Transverse colon (tissue), 4 donors: ENCODE measurements at regions of chr2 and their contacts with region 1.

Region 1: GRCh38 chr2:25362049-25362433 is 20.3 kb upstream of the DNMT3A start:
- DNase-seq: peak; percentile 94
- H3K4me3 ChIP-seq: peak overlapping the region; percentile 8 to 48 (median 28)
- H3K27ac ChIP-seq: peak overlapping the region; percentile 66 to 79 (median 72)
- H3K4me1 ChIP-seq: peaks cover 3 to 13% (median 10%) of the 10 kb centered on the region in 4 donors
- H3K27me3 ChIP-seq: no peaks in the 10 kb centered on the region
- CTCF ChIP-seq: peak; percentile 95 to 98 (median 97)
- EP300 ChIP-seq: no peak
- POLR2A ChIP-seq: peak; percentile 78

Region 2: DNA sequence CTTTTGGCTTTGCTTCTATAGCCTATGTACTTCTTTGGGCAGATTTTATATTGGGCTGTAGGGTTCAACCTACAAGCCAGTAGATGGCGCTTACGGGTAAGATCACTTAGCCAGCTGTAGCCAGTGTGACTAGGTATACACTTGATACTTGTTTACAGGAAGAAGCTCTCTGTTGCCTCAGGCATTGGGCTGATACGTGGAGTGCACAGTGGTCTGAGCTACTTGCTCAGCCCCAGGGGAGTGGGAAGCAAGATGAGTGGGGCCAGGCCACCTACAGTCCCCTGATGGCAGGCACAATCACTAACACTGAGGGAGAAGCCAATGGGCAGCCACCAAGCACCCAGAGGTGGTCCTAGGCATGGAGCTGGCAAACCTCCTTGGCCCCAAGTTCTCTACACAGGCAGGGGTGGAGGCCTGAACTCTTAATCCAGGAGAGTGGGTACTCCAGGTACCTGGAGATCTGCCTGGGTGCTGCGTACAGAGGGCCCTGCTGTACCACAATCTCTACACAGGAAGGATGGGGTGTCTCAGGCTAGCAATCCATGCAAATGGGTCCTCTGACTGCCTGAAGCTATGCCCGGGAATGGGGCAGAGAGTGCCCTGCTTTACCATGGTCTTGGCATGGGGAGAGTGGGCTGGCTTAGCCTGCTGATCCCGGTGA is 748.8 kb before region 1 on chr2:
- in situ Hi-C with region 1: no loop called
- intact Hi-C with region 1: no loop called
- DNase-seq: no peak
- H3K4me3 ChIP-seq: no peak overlapping the region
- H3K27ac ChIP-seq: no peak overlapping the region
- H3K4me1 ChIP-seq: no peaks in the 10 kb centered on the region
- H3K27me3 ChIP-seq: no peaks in the 10 kb centered on the region
- CTCF ChIP-seq: no peak
- EP300 ChIP-seq: no peak
- POLR2A ChIP-seq: no peak

Region 3: GRCh38 chr2:25521665-25522387 is 159.8 kb after region 1 on chr2:
- in situ Hi-C with region 1: loop called in 2 of 4 experiments (anchors 25 kb)
- intact Hi-C with region 1: loop called (anchors 10 kb)
- DNase-seq: no peak
- H3K4me3 ChIP-seq: peak overlapping the region in 3 of 4 donors; percentile 12 to 34 (median 24)
- H3K27ac ChIP-seq: peak overlapping the region in 2 of 4 donors; percentile 1 to 24
- H3K4me1 ChIP-seq: peaks cover 3 to 11% (median 8%) of the 10 kb centered on the region in 4 donors
- H3K27me3 ChIP-seq: no peaks in the 10 kb centered on the region
- CTCF ChIP-seq: peak; percentile 78 to 94 (median 83)
- EP300 ChIP-seq: no peak
- POLR2A ChIP-seq: no peak

Region 4: GRCh38 chr2:26178746-26179436 is 816.9 kb after region 1 on chr2:
- in situ Hi-C with region 1: no loop called
- intact Hi-C with region 1: no loop called
- DNase-seq: peak; percentile 56
- H3K4me3 ChIP-seq: peak overlapping the region; percentile 33 to 72 (median 52)
- H3K27ac ChIP-seq: no peak overlapping the region
- H3K4me1 ChIP-seq: peaks cover 7 to 16% (median 10%) of the 10 kb centered on the region in 4 donors
- H3K27me3 ChIP-seq: peaks cover 32% of the 10 kb centered on the region
- CTCF ChIP-seq: no peak
- EP300 ChIP-seq: no peak
- POLR2A ChIP-seq: no peak